AG04450 (cell line): ENCODE measurements at regions of chr17 and their contacts with region 1.

Region 1: GRCh38 chr17:83109793-83110645 is 30.6 kb downstream of the METRNL start:
- DNase-seq: peak; percentile 88
- H3K4me3 ChIP-seq: peak overlapping the region; percentile 43
- H3K27ac ChIP-seq: peak overlapping the region; percentile 70
- H3K27me3 ChIP-seq: no peaks in the 10 kb centered on the region
- CTCF ChIP-seq: no peak

Region 2: GRCh38 chr17:83083323-83084201 is 26.5 kb before region 1 on chr17:
- CTCF ChIA-PET with region 1: no interaction called
- POLR2A ChIA-PET with region 1: interaction called, 10 read pairs
- DNase-seq: peak; percentile 89
- H3K4me3 ChIP-seq: peak overlapping the region; percentile 35
- H3K27ac ChIP-seq: peak overlapping the region; percentile 98
- H3K27me3 ChIP-seq: peaks cover 3% of the 10 kb centered on the region
- CTCF ChIP-seq: no peak

Region 3: GRCh38 chr17:83096401-83097245 is 13.4 kb before region 1 on chr17:
- CTCF ChIA-PET with region 1: no interaction called
- POLR2A ChIA-PET with region 1: no interaction called
- DNase-seq: no peak
- H3K4me3 ChIP-seq: no peak overlapping the region
- H3K27ac ChIP-seq: no peak overlapping the region
- H3K27me3 ChIP-seq: no peaks in the 10 kb centered on the region
- CTCF ChIP-seq: no peak